Posterior cingulate gyrus (tissue), 11 donors: ENCODE measurements at regions of chr11 and their contacts with region 1.

Region 1: GRCh38 chr11:45451766-45452440 is 165.8 kb upstream of the SYT13 start:
- DNase-seq: no peak

Region 2: GRCh38 chr11:43969543-43969942 is 1482.4 kb before region 1 on chr11:
- intact Hi-C with region 1: no loop called
- DNase-seq: peak in 2 of 10 donors; percentile 29 to 82

Region 3: GRCh38 chr11:45285930-45286632 is 165.8 kb before region 1 on chr11 and contains the start of gene SYT13:
- intact Hi-C with region 1: no loop called
- DNase-seq: peak in 9 of 10 donors; percentile 13 to 97 (median 78)

Region 4: GRCh38 chr11:45475173-45475572 is 23.3 kb after region 1 on chr11:
- intact Hi-C with region 1: loop called (anchors 2 kb)
- DNase-seq: peak in 1 of 10 donors; percentile 40